ENCODE measurements at regions of chr3 and their contacts with region 1.

Region 1: DNA sequence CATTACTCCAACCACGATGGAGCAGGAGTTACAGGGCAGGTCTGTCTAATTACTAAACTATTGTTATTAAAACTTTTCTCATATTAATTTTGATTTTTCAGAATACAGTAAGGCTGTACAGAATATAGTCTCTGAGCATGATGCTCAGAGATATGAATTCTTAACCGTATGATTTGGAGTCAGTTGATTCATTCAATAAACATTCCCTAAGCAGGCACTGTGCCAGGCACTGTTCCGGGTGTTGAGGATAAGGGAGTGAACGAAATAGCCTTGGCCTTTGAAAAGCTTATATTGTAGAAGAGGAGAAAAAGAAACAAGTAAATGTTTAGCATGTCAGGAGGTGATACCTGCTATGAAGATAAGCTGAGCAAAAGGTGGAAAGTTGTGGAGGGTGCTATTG is 187.3 kb downstream of the KCNAB1 start:
- DNase-seq: peak; percentile 90 to 93
- ATAC-seq: peak; percentile 53
- H3K4me3 ChIP-seq: no peak overlapping the region
- H3K27ac ChIP-seq: peak overlapping the region in 1 of 2 donors; percentile 68
- H3K4me1 ChIP-seq: peaks cover 9 to 14% of the 10 kb centered on the region in 2 donors
- H3K27me3 ChIP-seq: no peaks in the 10 kb centered on the region

Region 2: DNA sequence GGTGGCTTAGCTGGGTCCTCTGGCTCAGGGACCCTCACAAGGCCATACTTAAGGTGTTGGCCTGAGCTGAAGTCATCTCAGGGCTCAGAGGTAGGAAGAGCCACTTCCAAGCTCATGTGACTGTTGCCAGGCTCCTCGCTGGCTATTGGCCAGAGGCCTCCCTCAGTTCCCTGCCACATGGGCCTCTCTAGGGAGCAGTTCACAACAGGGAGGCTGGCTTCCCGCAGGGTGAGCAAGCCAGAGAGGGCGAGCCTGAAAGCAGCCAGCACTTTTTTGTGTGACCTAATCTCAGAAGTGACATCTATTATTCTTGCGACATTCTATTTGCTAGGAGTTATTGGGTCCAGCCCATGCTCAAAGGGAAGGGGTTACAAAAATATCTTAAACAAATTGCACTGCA is 45.8 kb after region 1 on chr3:
- intact Hi-C with region 1: loop called in 1 of 2 experiments (anchors 5 kb)
- DNase-seq: peak; percentile 50 to 74
- ATAC-seq: peak; percentile 45
- H3K4me3 ChIP-seq: no peak overlapping the region
- H3K27ac ChIP-seq: no peak overlapping the region
- H3K4me1 ChIP-seq: no peaks in the 10 kb centered on the region
- H3K27me3 ChIP-seq: no peaks in the 10 kb centered on the region

Region 3: GRCh38 chr3:156382458-156383346 is 75.0 kb after region 1 on chr3:
- intact Hi-C with region 1: loop called in 1 of 2 experiments (anchors 5 kb)
- DNase-seq: no peak
- ATAC-seq: no peak
- H3K4me3 ChIP-seq: no peak overlapping the region
- H3K27ac ChIP-seq: no peak overlapping the region
- H3K4me1 ChIP-seq: peaks cover 2 to 18% of the 10 kb centered on the region in 2 donors
- H3K27me3 ChIP-seq: no peaks in the 10 kb centered on the region

Region 4: DNA sequence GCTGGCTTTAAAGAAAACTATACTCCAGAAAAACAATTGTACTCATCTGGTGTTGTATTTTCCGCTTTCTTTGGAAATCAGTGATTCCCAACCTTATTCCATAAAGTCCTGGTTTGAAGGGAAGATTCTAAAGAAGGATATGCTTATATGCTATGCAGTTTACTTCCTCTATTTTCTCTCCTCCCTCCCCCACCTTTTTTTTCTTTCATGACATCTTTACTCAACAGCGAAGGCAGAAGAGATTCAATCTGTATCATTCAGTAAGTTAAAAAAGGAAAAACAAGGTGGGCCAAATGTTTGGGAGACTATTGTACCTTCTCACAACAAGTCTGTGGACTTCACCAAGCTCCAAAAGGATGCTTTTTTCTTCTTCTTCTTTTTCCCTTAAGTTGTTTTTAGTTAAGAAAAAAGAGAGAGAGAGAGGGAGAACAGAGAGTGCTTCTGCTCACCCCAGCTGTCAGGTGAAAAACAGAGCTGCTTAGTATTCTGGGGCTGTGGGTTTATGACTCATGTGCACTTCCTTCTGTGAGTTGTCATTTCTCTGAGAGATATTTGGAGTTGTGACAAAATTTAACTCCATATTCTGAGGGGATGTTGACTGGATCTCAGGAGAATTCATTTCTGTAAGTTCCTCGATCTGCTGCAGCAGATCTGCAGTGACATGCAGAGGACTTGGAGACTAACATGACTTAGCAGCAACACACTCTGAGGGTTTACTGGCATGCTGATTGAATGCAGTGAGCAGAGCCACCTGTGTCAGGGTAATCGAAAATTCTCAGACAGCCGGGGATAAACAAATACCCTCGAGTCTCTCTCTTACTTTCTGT is 176.5 kb after region 1 on chr3:
- intact Hi-C with region 1: no loop called
- DNase-seq: no peak
- ATAC-seq: no peak
- H3K4me3 ChIP-seq: peak overlapping the region in 1 of 2 donors; percentile 10
- H3K27ac ChIP-seq: no peak overlapping the region
- H3K4me1 ChIP-seq: peaks cover 5 to 10% of the 10 kb centered on the region in 2 donors
- H3K27me3 ChIP-seq: no peaks in the 10 kb centered on the region